MCF 10A (cell line): ENCODE measurements at regions of chr3 and their contacts with region 1.

Region 1: GRCh38 chr3:9715764-9716437 is 12.3 kb downstream of the CPNE9 start:
- DNase-seq: peak; percentile 93
- H3K4me3 Mint-ChIP-seq: no peak overlapping the region
- H3K27ac Mint-ChIP-seq: no peak overlapping the region
- H3K4me1 Mint-ChIP-seq: peaks cover 7% of the 10 kb centered on the region
- H3K27me3 Mint-ChIP-seq: peaks cover 51% of the 10 kb centered on the region
- CTCF ChIP-seq: peak; percentile 89

Region 2: GRCh38 chr3:9503283-9503682 is 212.6 kb before region 1 on chr3:
- CTCF ChIA-PET with region 1: interaction called, 5 read pairs
- POLR2A ChIA-PET with region 1: no interaction called
- intact Hi-C with region 1: loop called (anchors 10 kb)
- DNase-seq: peak; percentile 73
- H3K4me3 Mint-ChIP-seq: no peak overlapping the region
- H3K27ac Mint-ChIP-seq: no peak overlapping the region
- H3K4me1 Mint-ChIP-seq: peaks cover 5% of the 10 kb centered on the region
- H3K27me3 Mint-ChIP-seq: no peaks in the 10 kb centered on the region
- CTCF ChIP-seq: peak; percentile 94

Region 3: GRCh38 chr3:9725775-9726515 is 10.0 kb after region 1 on chr3:
- CTCF ChIA-PET with region 1: interaction called, 15 read pairs
- POLR2A ChIA-PET with region 1: interaction called, 12 read pairs
- intact Hi-C with region 1: no loop called
- DNase-seq: no peak
- H3K4me3 Mint-ChIP-seq: no peak overlapping the region
- H3K27ac Mint-ChIP-seq: no peak overlapping the region
- H3K4me1 Mint-ChIP-seq: peaks cover 20% of the 10 kb centered on the region
- H3K27me3 Mint-ChIP-seq: peaks cover 28% of the 10 kb centered on the region
- CTCF ChIP-seq: no peak

Region 4: GRCh38 chr3:9749645-9750555 is 34.0 kb after region 1 on chr3 and contains the start of gene OGG1:
- CTCF ChIA-PET with region 1: interaction called, 4 read pairs
- POLR2A ChIA-PET with region 1: interaction called, 11 read pairs
- intact Hi-C with region 1: no loop called
- DNase-seq: peak; percentile 98
- H3K4me3 Mint-ChIP-seq: peak within 1 kb of the TSS; percentile 83
- H3K27ac Mint-ChIP-seq: peak within 1 kb of the TSS; percentile 84
- H3K4me1 Mint-ChIP-seq: peaks cover 17% of the 10 kb centered on the region
- H3K27me3 Mint-ChIP-seq: no peaks in the 10 kb centered on the region
- CTCF ChIP-seq: no peak
- total RNA-seq, gene OGG1: 15.3 and 17.7 TPM in 2 replicates

Region 5: DNA sequence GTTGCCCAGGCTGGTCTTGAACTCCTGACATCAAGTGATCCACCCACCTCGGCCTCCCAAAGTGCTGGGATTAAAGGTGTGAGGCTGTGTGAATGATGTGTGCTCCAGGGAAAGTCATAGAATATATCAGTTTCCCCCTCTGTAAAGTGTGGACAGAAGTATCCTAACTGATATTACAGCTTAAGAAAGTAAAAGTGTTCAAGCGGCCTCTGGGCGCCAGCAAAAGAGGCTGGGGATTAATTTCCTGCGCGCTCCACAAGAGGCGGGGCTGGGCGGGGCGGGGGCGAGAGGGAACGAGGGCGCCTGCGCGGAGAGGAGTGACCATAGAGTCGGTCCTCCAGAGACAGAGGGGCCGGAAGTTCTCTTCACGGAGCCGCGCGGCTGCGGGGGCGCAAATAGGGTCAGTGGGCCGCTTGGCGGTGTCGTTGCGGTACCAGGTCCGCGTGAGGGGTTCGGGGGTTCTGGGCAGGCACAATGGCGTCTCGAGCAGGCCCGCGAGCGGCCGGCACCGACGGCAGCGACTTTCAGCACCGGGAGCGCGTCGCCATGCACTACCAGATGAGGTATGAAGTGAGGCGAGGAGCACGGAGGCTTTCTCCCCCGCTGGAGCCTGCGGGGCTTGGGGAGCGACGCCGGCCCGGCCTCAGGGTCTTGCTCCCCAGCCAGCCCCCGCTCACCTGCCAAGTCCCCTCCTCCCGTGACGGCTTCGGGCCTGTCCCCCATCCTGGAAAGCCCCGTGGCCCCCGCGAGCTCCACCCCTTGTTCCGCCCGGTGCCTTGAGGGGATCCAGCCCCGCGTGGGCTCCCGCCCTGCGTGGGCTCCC is 174.6 kb after region 1 on chr3 and contains the start of gene JAGN1:
- CTCF ChIA-PET with region 1: no interaction called
- POLR2A ChIA-PET with region 1: no interaction called
- intact Hi-C with region 1: no loop called
- DNase-seq: peak; percentile 90
- H3K4me3 Mint-ChIP-seq: peak within 1 kb of the TSS; percentile 91
- H3K27ac Mint-ChIP-seq: peak within 1 kb of the TSS; percentile 98
- H3K4me1 Mint-ChIP-seq: peaks cover 45% of the 10 kb centered on the region
- H3K27me3 Mint-ChIP-seq: no peaks in the 10 kb centered on the region
- CTCF ChIP-seq: no peak
- total RNA-seq, gene JAGN1: 49.7 and 55.4 TPM in 2 replicates

Region 6: DNA sequence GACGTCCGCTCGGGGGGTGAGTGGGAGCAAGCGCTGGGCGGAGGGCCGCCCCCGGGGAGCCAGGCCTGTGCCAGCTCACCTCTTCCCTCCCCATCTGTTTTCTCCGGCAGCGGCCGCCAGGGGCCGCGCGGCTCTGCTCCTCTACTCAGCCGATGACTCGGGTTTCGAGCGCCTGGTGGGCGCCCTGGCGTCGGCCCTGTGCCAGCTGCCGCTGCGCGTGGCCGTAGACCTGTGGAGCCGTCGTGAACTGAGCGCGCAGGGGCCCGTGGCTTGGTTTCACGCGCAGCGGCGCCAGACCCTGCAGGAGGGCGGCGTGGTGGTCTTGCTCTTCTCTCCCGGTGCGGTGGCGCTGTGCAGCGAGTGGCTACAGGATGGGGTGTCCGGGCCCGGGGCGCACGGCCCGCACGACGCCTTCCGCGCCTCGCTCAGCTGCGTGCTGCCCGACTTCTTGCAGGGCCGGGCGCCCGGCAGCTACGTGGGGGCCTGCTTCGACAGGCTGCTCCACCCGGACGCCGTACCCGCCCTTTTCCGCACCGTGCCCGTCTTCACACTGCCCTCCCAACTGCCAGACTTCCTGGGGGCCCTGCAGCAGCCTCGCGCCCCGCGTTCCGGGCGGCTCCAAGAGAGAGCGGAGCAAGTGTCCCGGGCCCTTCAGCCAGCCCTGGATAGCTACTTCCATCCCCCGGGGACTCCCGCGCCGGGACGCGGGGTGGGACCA is 217.1 kb after region 1 on chr3:
- CTCF ChIA-PET with region 1: no interaction called
- POLR2A ChIA-PET with region 1: no interaction called
- intact Hi-C with region 1: loop called (anchors 5 kb)
- DNase-seq: peak; percentile 77
- H3K4me3 Mint-ChIP-seq: peak overlapping the region; percentile 90
- H3K27ac Mint-ChIP-seq: peak overlapping the region; percentile 86
- H3K4me1 Mint-ChIP-seq: peaks cover 23% of the 10 kb centered on the region
- H3K27me3 Mint-ChIP-seq: no peaks in the 10 kb centered on the region
- CTCF ChIP-seq: peak; percentile 59

Region 7: DNA sequence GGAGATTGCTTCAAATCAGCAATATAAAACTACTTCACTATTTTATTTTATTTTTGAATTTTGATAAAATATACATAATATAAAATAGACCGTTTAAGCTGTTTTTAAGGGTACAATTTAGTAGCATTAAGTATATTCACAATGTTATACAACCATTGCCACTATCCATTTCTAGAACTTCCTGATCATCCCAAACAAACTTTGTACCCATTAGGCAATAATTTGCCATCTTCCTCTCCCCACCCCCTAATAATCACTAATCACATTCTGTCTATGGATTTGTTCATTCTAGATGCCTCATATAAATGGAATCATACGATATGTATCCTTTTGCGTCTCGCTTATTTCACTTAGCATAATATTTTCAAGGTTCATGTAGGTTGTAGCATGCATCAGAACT is 339.2 kb after region 1 on chr3:
- CTCF ChIA-PET with region 1: no interaction called
- POLR2A ChIA-PET with region 1: no interaction called
- intact Hi-C with region 1: no loop called
- DNase-seq: no peak
- H3K4me3 Mint-ChIP-seq: no peak overlapping the region
- H3K27ac Mint-ChIP-seq: no peak overlapping the region
- H3K4me1 Mint-ChIP-seq: no peaks in the 10 kb centered on the region
- H3K27me3 Mint-ChIP-seq: no peaks in the 10 kb centered on the region
- CTCF ChIP-seq: no peak

Region 8: DNA sequence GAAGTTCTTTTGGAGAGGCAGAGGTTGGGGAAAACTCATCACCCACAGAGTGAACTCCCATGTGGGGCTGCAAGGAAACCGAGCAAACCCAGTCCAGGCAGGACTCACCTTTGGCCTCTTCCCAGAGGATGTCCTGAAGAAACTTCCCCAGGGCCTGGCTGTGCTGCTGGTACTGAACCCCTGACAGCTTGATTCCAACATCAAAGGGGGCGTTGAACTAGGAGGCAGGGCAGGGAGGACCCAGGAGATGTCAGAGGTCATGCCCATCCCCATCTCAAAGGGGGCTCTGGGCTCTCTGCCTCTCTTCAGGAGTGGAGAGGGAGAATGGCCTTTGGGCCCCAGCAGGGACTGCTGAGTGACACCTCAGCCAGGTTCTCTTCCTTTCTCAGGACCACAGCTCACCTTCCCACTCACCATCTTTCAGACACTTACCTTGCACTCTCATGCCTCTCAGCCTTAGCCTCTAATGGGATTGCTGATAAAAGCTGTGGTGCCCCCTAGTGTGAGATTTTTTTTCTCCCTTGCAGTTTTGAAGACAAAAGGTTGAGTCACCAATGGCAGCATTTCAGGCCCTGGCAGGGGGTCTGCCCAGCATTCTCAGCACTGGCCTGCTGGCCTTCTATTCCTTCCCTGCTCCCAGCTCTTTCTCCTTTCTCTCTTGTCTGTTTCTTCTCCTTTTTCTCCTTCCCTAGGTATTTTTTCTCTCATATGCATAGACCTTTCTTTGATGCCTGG is 570.9 kb after region 1 on chr3:
- CTCF ChIA-PET with region 1: no interaction called
- POLR2A ChIA-PET with region 1: no interaction called
- intact Hi-C with region 1: loop called (anchors 1 kb)
- DNase-seq: peak; percentile 83
- H3K4me3 Mint-ChIP-seq: no peak overlapping the region
- H3K27ac Mint-ChIP-seq: no peak overlapping the region
- H3K4me1 Mint-ChIP-seq: no peaks in the 10 kb centered on the region
- H3K27me3 Mint-ChIP-seq: no peaks in the 10 kb centered on the region
- CTCF ChIP-seq: peak; percentile 53